OCI-LY7 (cell line): ENCODE measurements at regions of chr10 and their contacts with region 1.

Region 1: DNA sequence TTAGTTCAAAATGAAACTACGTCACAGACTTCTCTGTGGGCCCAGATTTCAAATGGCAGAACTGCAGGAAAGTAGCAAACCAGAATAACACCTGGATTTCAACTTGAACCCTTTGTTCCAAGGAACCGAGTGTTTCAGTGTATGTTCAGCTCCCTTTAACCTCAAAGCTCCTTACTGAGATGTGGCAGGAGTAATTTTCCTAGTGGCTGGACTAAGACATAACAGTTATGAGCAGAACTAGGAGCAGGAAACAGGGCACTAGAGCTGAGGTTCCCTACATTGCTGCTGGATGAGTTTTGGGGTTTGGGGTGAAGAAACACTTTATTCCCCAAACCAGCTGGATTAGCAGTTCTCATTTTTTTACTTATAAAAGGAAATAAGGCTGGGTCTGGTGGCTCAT is 50.1 kb downstream of the NSUN6 start:
- DNase-seq: no peak
- H3K4me3 ChIP-seq: no peak overlapping the region
- H3K27ac ChIP-seq: no peak overlapping the region
- H3K4me1 ChIP-seq: no peaks in the 10 kb centered on the region
- CTCF ChIP-seq: no peak

Region 2: DNA sequence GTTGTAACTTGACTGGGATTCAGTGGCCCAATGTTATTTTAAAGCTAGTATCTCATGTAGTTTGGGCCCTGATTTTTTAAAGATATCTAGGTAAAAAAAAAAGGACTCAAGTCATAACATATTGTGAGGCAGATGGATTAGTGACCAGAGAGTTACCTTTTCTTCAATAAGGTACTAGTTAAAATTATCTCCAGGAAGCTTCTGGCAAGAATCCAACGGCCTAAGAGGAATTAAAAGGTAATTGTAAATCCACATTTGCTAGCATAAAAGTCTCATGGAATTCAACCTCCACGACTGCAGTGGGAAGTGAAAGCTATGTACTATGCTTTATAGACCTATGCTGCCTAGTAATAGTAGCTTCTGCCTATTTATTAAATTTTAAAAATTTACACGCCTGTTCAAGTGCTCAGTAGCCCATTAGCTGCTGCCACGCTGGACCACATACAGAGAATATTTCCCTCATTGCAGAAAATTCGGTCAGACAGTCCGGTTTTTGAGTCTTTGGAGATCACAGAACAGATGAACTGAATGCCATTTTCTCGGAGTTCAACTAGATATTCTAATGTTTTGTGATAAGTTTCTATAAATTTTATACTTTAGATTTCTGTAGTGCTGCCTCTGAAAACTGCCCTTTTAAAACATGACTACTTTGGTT is 68.3 kb before region 1 on chr10:
- CTCF ChIA-PET with region 1: no interaction called
- POLR2A ChIA-PET with region 1: interaction called, 12 read pairs
- intact Hi-C with region 1: no loop called
- DNase-seq: no peak
- H3K4me3 ChIP-seq: no peak overlapping the region
- H3K27ac ChIP-seq: no peak overlapping the region
- H3K4me1 ChIP-seq: no peaks in the 10 kb centered on the region
- CTCF ChIP-seq: no peak